ENCODE measurements at regions of chr14 and their contacts with region 1.

Region 1: GRCh38 chr14:88667555-88668273 is 104.9 kb downstream of the ZC3H14 start:
- DNase-seq: peak; percentile 66
- H3K4me3 Mint-ChIP-seq: no peak overlapping the region
- H3K27ac Mint-ChIP-seq: no peak overlapping the region
- H3K4me1 Mint-ChIP-seq: no peaks in the 10 kb centered on the region
- H3K27me3 Mint-ChIP-seq: no peaks in the 10 kb centered on the region

Region 2: GRCh38 chr14:88535149-88535548 is 132.6 kb before region 1 on chr14:
- CTCF ChIA-PET with region 1: no interaction called
- intact Hi-C with region 1: no loop called
- DNase-seq: no peak
- H3K4me3 Mint-ChIP-seq: no peak overlapping the region
- H3K27ac Mint-ChIP-seq: no peak overlapping the region
- H3K4me1 Mint-ChIP-seq: no peaks in the 10 kb centered on the region
- H3K27me3 Mint-ChIP-seq: peaks cover 2% of the 10 kb centered on the region

Region 3: GRCh38 chr14:88628462-88628861 is 39.3 kb before region 1 on chr14:
- CTCF ChIA-PET with region 1: no interaction called
- intact Hi-C with region 1: no loop called
- DNase-seq: no peak
- H3K4me3 Mint-ChIP-seq: no peak overlapping the region
- H3K27ac Mint-ChIP-seq: no peak overlapping the region
- H3K4me1 Mint-ChIP-seq: no peaks in the 10 kb centered on the region
- H3K27me3 Mint-ChIP-seq: no peaks in the 10 kb centered on the region

Region 4: DNA sequence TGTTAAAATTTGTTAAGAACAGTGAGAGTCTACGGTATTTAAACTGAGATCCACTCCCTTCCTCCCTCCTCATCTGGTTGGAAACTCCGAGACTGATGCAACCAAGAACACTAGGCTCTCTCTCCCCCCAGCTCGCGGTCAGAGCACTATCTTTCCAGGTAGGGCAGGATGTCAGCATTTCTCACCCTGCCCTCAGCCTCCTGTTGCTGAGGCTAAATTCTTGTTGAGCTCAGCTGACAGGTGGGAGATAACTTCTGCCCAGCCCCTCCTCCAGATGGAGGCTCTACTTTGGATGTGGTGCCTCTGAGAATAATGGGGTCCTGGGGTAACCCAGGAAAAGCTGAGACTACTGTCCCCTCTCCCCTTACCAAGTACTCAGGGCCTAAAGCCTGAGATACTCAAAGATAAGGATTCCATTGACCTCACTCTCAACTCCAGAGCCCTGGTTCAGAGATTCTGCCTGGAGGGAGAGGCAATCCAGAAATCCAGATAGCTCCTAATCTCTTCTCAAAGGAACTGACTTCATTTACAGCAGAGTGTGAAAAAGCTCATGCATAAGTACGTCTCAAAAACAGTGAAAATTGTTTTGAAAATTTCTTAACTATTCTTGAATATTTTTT is 14.9 kb after region 1 on chr14:
- CTCF ChIA-PET with region 1: interaction called, 13 read pairs
- intact Hi-C with region 1: no loop called
- DNase-seq: no peak
- H3K4me3 Mint-ChIP-seq: no peak overlapping the region
- H3K27ac Mint-ChIP-seq: no peak overlapping the region
- H3K4me1 Mint-ChIP-seq: no peaks in the 10 kb centered on the region
- H3K27me3 Mint-ChIP-seq: no peaks in the 10 kb centered on the region

Region 5: DNA sequence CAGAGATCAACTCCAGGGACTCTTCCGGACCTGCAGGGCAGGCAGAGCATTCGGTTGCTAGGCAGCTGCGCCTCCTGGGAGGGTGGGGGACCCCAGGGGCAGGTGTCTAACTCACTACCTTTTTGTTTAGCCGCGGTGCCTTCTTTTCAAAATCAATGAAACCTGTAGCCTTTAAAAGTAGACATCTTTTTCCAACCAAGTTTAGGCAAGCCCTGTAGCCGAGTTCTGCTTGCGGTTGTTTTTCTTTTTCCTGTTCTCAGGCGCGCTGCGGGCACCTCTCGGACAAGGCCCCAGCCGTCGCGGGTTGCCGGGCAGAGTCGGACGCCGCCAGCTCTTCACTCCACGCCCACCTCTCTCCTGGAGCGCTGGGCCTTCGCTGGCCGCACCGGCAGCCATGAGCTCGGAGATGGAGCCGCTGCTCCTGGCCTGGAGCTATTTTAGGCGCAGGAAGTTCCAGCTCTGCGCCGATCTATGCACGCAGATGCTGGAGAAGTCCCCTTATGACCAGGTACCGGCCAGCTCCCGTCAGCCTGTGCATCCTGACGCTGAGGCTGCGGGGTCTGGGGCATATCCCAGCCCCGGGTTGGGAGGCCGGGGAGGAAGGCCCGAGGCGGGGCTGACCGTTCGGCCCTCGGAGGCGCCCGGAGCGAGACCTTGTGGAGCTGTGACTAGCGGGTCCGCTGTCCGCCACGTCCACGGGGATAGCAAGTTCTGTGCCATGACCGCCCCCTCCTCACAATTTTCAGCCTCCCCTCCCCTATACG is 156.8 kb after region 1 on chr14 and contains the start of gene TTC8:
- CTCF ChIA-PET with region 1: no interaction called
- intact Hi-C with region 1: loop called (anchors 1 kb)
- DNase-seq: peak; percentile 88
- H3K4me3 Mint-ChIP-seq: peak within 1 kb of the TSS; percentile 80
- H3K27ac Mint-ChIP-seq: peak within 1 kb of the TSS; percentile 92
- H3K4me1 Mint-ChIP-seq: peaks cover 9% of the 10 kb centered on the region
- H3K27me3 Mint-ChIP-seq: no peaks in the 10 kb centered on the region
- total RNA-seq, gene TTC8: 1.8 to 1.9 TPM

Region 6: GRCh38 chr14:89013084-89013504 is 345.4 kb after region 1 on chr14:
- CTCF ChIA-PET with region 1: interaction called, 8 read pairs
- intact Hi-C with region 1: loop called (anchors 1 kb)
- DNase-seq: peak; percentile 52
- H3K4me3 Mint-ChIP-seq: no peak overlapping the region
- H3K27ac Mint-ChIP-seq: no peak overlapping the region
- H3K4me1 Mint-ChIP-seq: peaks cover under 1% of the 10 kb centered on the region
- H3K27me3 Mint-ChIP-seq: peaks cover 7% of the 10 kb centered on the region

Measured in activated naive CD4-positive, alpha-beta T cell treated with anti-CD3 and anti-CD28 coated beads for 36 hours (primary cell).